ENCODE measurements at regions of chr6 and their contacts with region 1.

Region 1: DNA sequence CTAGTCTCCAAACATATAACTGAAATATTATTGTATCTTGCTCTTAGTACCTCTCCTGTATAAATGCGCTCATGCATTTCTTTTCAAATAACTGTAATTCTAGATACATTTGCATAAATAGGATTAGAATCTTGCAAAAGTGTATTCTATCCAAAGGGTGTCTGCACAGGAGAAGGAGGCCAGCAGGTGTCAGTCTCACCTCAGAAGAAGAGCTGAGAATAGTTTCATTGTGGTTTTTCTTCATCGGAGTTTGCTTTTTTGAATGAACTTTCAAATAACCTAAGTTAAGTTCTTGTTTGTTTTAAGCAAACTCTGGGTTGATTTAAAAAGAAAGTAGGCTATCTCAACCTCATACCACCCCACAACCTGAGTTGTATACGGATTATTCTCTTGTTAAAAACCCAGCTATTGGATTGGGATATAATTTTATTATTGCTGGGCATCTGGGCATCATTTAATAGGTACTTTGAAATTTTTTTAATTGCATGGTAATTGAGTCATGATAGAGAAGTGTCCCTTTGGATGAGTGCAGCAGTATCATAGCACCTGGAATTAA is 125.0 kb upstream of the MLIP start:
- DNase-seq: peak in 6 of 10 donors; percentile 32 to 79 (median 44)

Region 2: GRCh38 chr6:53581173-53581773 is 405.0 kb before region 1 on chr6:
- intact Hi-C with region 1: no loop called
- DNase-seq: no peak

Region 3: DNA sequence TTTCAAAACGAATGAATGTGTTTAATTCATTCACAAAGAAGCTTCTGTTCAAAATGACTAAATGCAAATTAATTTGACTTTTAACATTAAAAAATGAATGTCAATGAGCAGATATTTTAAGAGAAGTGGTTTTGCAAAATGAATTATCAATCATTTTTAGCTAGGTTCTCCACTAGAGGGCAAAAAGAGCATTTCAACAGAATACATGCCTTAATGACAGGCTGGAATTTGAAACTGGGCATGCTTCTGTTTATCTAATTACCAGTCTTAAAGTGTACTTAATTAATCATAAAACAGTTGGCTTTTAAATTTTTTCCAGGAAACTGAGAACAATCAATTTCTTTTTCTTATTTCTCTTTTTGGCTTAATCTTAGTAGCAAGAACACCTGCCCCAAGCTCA is 258.2 kb after region 1 on chr6:
- intact Hi-C with region 1: loop called (anchors 10 kb)
- DNase-seq: no peak

Region 4: DNA sequence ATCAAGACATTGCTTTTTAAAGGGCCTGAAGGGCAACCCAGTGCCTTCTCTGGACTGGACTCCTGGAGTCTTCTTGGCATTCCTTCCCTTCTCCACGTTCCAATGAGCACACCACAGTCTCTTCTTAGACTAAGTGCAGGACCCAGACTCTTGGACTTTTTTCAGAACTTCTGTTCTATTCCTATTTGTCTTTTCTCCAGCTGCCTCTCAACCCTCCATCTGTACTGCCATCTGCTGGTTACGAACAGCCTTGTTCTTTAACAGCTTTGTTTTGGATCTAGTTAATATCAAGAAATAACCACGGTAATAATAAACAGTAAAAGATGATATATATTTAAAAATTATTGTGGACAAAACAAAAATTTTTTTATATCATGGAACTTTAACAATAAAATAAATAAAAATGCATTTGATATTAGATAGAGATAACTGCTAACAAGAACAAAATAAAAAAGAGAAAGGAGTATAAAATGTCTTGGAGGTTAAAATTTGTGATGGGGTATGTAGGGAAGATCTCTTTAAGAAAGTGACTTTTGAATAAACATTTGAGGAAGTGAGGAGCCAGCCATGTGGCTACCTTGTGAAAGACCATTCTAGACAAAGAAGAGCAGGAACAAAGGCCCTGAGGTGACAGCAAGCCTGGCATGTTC is 1083.0 kb after region 1 on chr6:
- intact Hi-C with region 1: loop called (anchors 10 kb)
- DNase-seq: peak in 2 of 10 donors; percentile 5 to 12

Region 5: GRCh38 chr6:55239099-55239498 is 1252.9 kb after region 1 on chr6:
- intact Hi-C with region 1: loop called (anchors 5 kb)
- DNase-seq: no peak

Measured in posterior cingulate gyrus (tissue), 11 donors.